GM13976 (cell line): ENCODE measurements at regions of chr17 and their contacts with region 1.

Region 1: DNA sequence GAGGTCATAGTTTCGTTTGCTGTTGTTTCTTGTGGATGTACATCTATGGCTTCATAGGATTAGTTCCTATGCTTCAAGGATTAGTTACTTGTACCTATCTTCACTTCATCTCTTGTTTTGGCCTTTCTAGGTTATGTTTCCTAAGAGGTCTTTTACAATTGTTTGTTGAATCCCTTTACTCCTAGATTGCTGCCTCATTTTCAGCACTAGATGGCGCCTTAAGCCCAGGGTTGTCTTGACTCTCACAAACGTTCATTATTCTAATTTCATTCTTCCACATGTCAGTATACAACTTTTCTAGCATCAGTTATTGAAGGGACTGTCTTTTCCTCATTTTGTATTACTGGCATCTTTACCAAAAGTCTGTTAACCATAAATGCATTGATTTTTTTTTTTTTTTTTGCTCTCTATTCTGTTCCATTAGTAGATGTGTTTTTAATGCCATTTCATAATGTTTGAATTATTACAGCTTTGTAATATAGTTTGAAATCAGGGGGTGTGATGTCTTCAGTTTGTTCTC is 45.0 kb upstream of the NACA2 start:
- DNase-seq: peak; percentile 21
- CTCF ChIP-seq: peak; percentile 57

Region 2: GRCh38 chr17:61490540-61491412 is 145.2 kb before region 1 on chr17:
- in situ Hi-C with region 1: no loop called
- DNase-seq: no peak
- CTCF ChIP-seq: no peak

Region 3: GRCh38 chr17:61843435-61843834 is 207.5 kb after region 1 on chr17:
- in situ Hi-C with region 1: loop called (anchors 5 kb)
- DNase-seq: no peak
- CTCF ChIP-seq: no peak

Region 4: DNA sequence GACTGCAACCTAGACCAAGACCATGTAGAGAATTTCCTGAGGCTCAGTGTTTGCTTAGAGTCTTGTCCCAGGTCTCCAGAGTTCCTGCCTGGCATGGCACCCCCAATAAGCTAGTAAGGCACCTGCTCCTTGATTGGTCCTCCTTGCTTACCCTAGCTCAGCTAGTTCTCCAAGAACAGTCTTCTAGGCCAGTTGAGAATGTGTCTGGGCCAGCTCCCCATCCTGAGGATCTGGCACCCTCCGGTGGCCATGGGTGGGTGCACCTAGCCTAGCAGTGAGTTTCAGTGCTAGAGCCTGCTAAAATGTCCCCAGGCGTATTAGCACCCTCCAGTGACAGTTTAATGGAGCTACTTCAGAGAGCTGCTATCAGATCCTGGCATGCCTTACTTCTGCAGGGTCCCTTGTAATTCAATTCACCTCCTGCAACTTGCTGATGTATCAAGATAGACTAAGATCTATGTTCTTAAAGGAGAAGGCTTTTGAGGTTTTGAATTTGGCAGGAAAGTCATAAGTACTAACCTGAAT is 473.5 kb after region 1 on chr17:
- in situ Hi-C with region 1: loop called (anchors 10 kb)
- DNase-seq: peak; percentile 77
- CTCF ChIP-seq: peak; percentile 95